Activated B cell treated with CpG ODN at 0.5 μM for 24 hours (primary cell): ENCODE measurements at regions of chr11 and their contacts with region 1.

Region 1: DNA sequence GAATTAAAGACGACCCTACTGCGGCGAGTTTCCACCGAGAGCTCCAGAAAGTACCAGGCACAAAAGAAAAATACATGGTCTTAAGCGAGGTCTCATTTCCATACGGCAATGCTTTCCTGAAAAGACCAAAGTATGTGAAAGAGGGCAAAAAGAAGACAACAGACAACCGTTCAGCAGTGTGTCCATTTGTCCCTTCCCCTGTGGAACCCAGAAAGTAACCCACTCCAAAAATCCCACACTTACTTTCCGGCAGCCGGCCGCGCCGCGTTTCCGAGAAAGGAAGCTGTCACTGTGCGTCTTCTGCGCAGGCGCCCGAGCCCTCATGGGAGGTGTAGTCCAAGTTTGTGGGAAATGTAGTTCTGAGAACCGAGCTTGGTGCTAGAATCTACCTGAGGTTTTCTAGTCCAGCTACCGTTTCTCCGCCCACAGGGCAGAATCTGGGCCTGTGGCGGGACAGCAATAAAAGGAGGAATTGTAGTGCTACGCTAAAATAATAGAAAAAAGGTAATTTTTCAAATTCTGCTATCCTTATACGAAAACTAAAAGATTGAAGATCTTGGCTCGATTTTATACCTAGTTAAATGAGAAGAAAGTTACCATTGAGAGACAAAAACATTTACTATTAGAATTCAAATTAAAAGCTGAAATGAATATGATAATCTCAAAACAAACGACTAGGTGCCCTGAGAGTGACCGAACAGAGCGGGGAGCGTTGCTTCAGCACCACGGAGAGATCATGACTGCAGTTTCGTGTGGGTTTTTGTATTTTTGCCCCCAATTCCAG is at the start of gene PUS3:
- DNase-seq: peak; percentile 77
- ATAC-seq: peak; percentile 96
- H3K4me3 Mint-ChIP-seq: peak within 1 kb of the TSS; percentile 94
- H3K27ac Mint-ChIP-seq: peak within 1 kb of the TSS; percentile 88
- H3K4me1 Mint-ChIP-seq: peaks cover 31% of the 10 kb centered on the region
- H3K27me3 Mint-ChIP-seq: peaks cover 22% of the 10 kb centered on the region
- CTCF ChIP-seq: no peak
- total RNA-seq, gene PUS3: 10.2 and 13.2 TPM in 2 replicates

Region 2: GRCh38 chr11:125941619-125942611 is 38.8 kb after region 1 on chr11:
- CTCF ChIA-PET with region 1: no interaction called
- POLR2A ChIA-PET with region 1: no interaction called
- intact Hi-C with region 1: no loop called
- DNase-seq: no peak
- ATAC-seq: no peak
- H3K4me3 Mint-ChIP-seq: no peak overlapping the region
- H3K27ac Mint-ChIP-seq: no peak overlapping the region
- H3K4me1 Mint-ChIP-seq: no peaks in the 10 kb centered on the region
- H3K27me3 Mint-ChIP-seq: no peaks in the 10 kb centered on the region
- CTCF ChIP-seq: no peak

Region 3: GRCh38 chr11:126062679-126063506 is 159.8 kb after region 1 on chr11 and contains the start of gene CDON:
- CTCF ChIA-PET with region 1: no interaction called
- POLR2A ChIA-PET with region 1: no interaction called
- intact Hi-C with region 1: loop called (anchors 5 kb)
- DNase-seq: peak; percentile 72
- ATAC-seq: peak; percentile 90
- H3K4me3 Mint-ChIP-seq: peak within 1 kb of the TSS; percentile 81
- H3K27ac Mint-ChIP-seq: no peak within 1 kb of the TSS
- H3K4me1 Mint-ChIP-seq: peaks cover 6% of the 10 kb centered on the region
- H3K27me3 Mint-ChIP-seq: peaks cover 38% of the 10 kb centered on the region
- CTCF ChIP-seq: no peak
- total RNA-seq, gene CDON: 0.24 and 0.27 TPM in 2 replicates